CD8-positive, alpha-beta T cell (primary cell): ENCODE measurements at regions of chr5 and their contacts with region 1.

Region 1: GRCh38 chr5:66987949-66988838 is 208.4 kb downstream of the CD180 start:
- DNase-seq: peak in 2 of 9 experiments; percentile 31 to 51
- ATAC-seq: peak; percentile 69
- H3K4me3 ChIP-seq: no peak overlapping the region
- H3K4me3 Mint-ChIP-seq: no peak overlapping the region
- H3K27ac ChIP-seq: no peak overlapping the region
- H3K27ac Mint-ChIP-seq: no peak overlapping the region
- H3K4me1 ChIP-seq: no peaks in the 10 kb centered on the region
- H3K4me1 Mint-ChIP-seq: no peaks in the 10 kb centered on the region
- H3K27me3 ChIP-seq: no peaks in the 10 kb centered on the region
- H3K27me3 Mint-ChIP-seq: no peaks in the 10 kb centered on the region
- CTCF ChIP-seq: peak; percentile 94

Region 2: DNA sequence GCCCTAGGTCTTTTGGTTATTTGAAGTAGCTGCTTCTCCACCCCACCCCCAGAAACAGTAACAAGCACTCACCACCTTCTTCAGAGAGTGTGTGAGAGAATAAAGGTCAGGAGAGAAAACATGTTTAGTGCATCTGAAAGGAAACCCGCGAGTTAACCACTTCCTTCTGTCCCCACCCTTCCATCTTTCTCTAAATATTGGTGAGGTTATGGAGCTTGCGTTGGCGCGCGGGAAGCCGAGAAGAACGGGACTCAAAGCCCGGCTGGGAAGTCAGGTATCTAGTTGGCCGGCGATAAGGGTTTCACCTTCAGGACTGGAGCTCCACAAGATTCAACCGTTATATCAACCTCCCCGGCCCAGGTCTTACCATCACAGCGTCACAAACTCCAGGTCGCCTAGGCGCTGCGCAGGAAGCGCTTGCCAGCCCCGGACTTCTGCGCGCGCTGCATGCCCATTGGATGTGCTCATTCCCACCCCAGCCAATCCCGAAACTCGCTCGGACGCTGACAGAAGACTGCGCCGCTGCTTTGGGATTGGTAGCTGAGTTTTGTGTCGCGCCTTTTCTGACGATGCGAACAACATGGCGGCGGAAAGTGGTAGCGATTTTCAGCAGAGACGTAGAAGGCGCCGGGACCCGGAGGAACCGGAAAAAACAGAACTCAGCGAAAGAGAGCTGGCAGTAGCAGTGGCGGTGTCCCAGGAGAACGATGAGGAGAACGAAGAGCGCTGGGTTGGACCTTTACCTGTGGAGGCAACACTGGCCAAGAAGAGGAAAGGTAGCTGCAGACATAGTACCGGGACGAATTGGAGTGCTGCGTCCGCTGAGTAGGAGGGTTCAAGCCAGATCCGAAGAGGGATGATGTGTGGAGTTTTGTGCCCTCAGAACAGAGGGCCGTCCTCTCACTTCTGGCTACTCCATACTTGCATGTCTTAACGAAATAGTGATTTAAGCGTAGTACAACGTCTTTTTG is 1425.2 kb before region 1 on chr5 and contains the starts of genes CENPK and PPWD1:
- CTCF ChIA-PET with region 1: no interaction called
- POLR2A ChIA-PET with region 1: no interaction called
- intact Hi-C with region 1: loop called in 1 of 2 experiments (anchors 10 kb)
- DNase-seq: peak; percentile 83 to 98 (median 95)
- ATAC-seq: peak; percentile 97
- H3K4me3 ChIP-seq: peak within 1 kb of the TSS; percentile 74 to 82
- H3K4me3 Mint-ChIP-seq: peak within 1 kb of the TSS; percentile 100
- H3K27ac ChIP-seq: peak within 1 kb of the TSS; percentile 97 to 98
- H3K27ac Mint-ChIP-seq: peak within 1 kb of the TSS; percentile 100
- H3K4me1 ChIP-seq: peaks cover 37% of the 10 kb centered on the region
- H3K4me1 Mint-ChIP-seq: peaks cover 42% of the 10 kb centered on the region
- H3K27me3 ChIP-seq: no peaks in the 10 kb centered on the region
- H3K27me3 Mint-ChIP-seq: no peaks in the 10 kb centered on the region
- CTCF ChIP-seq: no peak
- total RNA-seq, gene CENPK: 5.1 to 5.3 TPM
- total RNA-seq, gene PPWD1: 78.8 to 81.5 TPM

Region 3: DNA sequence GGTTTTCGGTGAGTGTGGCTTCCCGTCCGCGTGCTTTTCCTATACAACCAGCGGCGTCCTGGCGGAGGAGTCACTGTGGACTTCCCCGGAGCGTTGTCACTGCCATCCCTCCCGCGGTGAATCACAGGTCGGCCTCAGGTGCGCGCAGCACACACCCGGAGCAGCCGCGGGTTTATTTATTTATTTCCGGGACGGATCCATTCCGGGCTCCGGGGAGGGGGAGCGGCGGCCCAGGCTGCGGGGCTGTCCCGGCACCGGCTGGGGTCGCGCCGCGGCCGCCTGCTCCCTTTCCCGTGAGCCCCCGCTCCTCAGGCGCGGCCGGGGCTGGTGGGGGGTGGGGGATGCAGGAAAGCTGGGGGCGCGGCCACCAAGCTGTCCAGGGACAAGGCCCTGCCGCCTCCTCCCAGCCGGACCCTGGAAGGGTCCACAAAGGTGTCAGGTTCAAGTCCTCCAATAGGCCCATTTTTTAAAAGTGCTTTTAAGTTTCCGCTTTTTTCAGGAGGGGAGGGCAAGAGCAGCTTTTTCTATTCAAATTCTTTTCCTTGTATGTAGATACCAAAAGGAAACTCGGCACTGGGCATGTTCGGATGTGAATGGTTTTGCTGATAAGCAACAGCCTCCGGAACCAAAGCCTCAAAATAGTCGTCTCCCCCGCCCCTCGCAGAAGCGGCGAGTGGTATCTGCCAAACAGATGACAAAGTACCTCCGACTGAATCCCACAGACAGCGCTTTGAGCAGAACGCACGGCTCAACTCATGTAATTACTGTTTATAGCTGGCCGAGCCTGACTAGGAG is 15.9 kb after region 1 on chr5:
- CTCF ChIA-PET with region 1: interaction called, 8 read pairs
- POLR2A ChIA-PET with region 1: interaction called, 5 read pairs
- intact Hi-C with region 1: loop called in 1 of 2 experiments (anchors 1 kb)
- DNase-seq: peak; percentile 70 to 93 (median 87)
- ATAC-seq: peak; percentile 78
- H3K4me3 ChIP-seq: peak overlapping the region; percentile 75 to 85
- H3K4me3 Mint-ChIP-seq: peak overlapping the region; percentile 95
- H3K27ac ChIP-seq: peak overlapping the region; percentile 59 to 75
- H3K27ac Mint-ChIP-seq: peak overlapping the region; percentile 98
- H3K4me1 ChIP-seq: peaks cover 36% of the 10 kb centered on the region
- H3K4me1 Mint-ChIP-seq: peaks cover 52% of the 10 kb centered on the region
- H3K27me3 ChIP-seq: no peaks in the 10 kb centered on the region
- H3K27me3 Mint-ChIP-seq: no peaks in the 10 kb centered on the region
- CTCF ChIP-seq: no peak

Region 4: DNA sequence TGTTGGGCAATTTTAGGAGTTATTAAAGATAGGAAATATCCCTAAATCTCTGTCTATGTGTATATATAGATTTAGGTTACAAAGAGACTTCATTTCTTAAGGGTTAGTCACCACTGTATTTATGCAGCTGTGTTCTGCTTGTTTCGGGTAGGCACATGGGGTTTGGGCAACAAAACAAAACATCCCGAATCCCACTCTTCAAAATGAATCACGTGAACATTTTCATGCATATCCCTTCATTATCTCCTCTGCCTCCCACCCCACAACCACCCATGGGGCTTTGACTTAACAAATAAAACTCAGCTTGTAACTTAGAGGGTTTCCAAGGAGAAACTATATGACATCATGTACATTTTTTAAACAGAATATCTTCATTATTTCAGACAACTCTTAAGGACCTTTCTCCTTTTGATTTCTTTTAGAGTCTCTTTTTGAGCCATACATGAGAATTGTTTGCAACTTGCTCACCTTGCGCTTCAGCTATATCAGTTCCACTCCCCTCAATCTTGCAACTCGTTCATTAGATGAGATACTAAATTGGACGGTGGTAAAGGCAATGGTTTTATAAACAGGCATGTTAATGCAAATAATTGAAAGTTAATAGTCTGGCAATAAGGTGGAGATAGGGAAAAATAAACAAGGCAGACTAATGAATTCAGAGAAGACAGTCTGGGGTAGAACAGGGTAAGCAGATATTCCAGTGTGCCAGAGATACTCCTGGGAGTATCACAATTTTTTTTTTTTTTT is 71.7 kb after region 1 on chr5:
- CTCF ChIA-PET with region 1: no interaction called
- POLR2A ChIA-PET with region 1: no interaction called
- intact Hi-C with region 1: loop called in 1 of 2 experiments (anchors 5 kb)
- DNase-seq: no peak
- ATAC-seq: no peak
- H3K4me3 ChIP-seq: no peak overlapping the region
- H3K4me3 Mint-ChIP-seq: no peak overlapping the region
- H3K27ac ChIP-seq: no peak overlapping the region
- H3K27ac Mint-ChIP-seq: no peak overlapping the region
- H3K4me1 ChIP-seq: no peaks in the 10 kb centered on the region
- H3K4me1 Mint-ChIP-seq: peaks cover 4% of the 10 kb centered on the region
- H3K27me3 ChIP-seq: no peaks in the 10 kb centered on the region
- H3K27me3 Mint-ChIP-seq: no peaks in the 10 kb centered on the region
- CTCF ChIP-seq: no peak

Region 5: DNA sequence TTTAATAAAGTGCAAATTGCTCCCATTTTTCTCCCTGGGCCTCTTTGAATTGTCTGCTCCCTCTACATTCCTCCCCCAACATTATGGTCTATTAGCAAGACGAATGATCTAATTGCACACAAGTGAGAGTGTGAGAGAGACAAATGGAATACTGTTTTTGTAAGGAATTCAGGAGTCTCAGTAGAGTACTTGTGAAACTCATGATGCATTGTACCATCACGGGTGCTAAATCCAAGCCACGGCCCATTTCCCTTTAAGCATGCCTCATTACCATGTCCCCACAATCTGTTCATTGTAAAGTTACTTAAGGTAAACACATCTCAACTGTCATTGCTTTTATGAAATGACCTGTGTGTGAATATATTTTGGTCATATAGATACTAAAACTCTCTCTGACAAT is 145.6 kb after region 1 on chr5:
- CTCF ChIA-PET with region 1: no interaction called
- POLR2A ChIA-PET with region 1: no interaction called
- intact Hi-C with region 1: no loop called
- DNase-seq: no peak
- ATAC-seq: no peak
- H3K4me3 ChIP-seq: no peak overlapping the region
- H3K4me3 Mint-ChIP-seq: no peak overlapping the region
- H3K27ac ChIP-seq: no peak overlapping the region
- H3K27ac Mint-ChIP-seq: no peak overlapping the region
- H3K4me1 ChIP-seq: no peaks in the 10 kb centered on the region
- H3K4me1 Mint-ChIP-seq: no peaks in the 10 kb centered on the region
- H3K27me3 ChIP-seq: no peaks in the 10 kb centered on the region
- H3K27me3 Mint-ChIP-seq: no peaks in the 10 kb centered on the region
- CTCF ChIP-seq: no peak

Region 6: DNA sequence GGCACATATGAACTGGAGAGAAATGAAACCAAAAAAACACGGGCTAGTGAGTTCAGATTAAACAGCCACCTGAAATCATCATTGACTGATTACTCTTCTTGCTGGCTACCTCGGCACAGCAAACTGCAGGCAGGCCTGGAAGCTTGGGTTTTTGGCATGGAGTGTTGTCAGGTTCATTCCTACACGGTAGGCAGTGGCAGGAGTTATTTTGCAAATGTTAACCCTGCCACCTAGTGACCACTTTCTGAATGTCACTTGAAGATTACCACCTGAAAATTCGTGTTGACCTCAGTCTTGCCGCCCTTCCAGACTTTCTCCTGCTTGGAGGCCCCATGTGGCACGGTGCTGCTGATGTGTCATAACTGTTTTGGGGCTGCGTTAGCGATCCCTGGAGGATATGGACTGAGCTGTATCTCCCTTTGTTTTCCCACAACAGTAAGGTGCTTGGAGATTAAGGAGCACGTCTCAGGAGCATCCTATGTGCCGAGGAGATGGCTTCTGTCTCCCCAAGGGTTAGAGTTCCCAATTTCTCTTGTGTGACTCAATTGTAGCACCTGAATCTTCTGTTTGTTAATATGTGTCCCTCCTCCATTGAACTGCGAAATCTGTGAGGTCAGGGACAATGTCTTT is 221.1 kb after region 1 on chr5:
- CTCF ChIA-PET with region 1: interaction called, 11 read pairs
- POLR2A ChIA-PET with region 1: no interaction called
- intact Hi-C with region 1: loop called (anchors 1 kb)
- DNase-seq: peak; percentile 12 to 84 (median 61)
- ATAC-seq: peak; percentile 51
- H3K4me3 ChIP-seq: no peak overlapping the region
- H3K4me3 Mint-ChIP-seq: peak overlapping the region; percentile 13
- H3K27ac ChIP-seq: no peak overlapping the region
- H3K27ac Mint-ChIP-seq: peak overlapping the region; percentile 86
- H3K4me1 ChIP-seq: peaks cover 49% of the 10 kb centered on the region
- H3K4me1 Mint-ChIP-seq: peaks cover 58% of the 10 kb centered on the region
- H3K27me3 ChIP-seq: no peaks in the 10 kb centered on the region
- H3K27me3 Mint-ChIP-seq: no peaks in the 10 kb centered on the region
- CTCF ChIP-seq: peak; percentile 81

Region 7: DNA sequence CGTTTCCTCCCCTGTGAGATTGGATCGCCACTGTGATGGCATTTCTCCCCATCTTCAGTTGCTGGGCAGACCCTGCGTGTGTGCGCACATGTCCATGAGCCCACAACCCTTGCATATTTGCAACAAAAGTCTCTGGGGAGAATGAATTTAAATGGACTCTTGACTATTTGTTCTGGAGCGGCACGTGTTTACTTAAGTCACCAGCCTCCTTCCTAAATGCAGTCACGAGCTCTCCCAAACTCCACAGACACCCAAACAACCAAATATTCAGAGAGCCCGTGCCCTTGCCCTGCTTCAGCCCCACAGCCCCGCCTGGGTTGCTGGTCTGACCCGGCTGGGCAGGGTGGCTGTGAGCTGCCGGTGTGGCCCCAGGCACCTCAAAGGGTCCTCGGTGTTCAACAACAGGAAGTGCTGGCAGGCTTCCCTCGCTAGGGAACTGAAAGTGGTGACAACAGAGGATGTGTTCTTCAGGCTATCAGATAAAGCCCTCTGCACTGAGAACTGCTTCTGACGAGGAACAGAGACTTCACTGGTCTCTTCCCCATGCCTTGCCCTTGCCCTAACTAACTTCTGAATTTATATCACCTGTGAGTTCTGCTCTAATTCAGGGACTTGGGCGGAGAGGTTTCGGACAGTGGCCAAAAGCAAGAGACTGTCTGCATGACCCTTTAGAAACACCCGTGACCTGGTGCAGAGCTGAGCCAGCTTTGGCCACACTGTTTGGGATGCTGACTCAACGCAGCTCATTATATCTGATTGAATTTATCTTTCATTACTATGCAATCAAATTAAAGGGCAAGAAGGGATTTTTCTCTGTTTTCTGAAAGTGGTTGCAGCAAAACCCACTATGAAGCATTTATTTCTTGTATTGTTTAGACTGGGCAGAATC is 227.6 kb after region 1 on chr5:
- CTCF ChIA-PET with region 1: interaction called, 11 read pairs
- POLR2A ChIA-PET with region 1: no interaction called
- intact Hi-C with region 1: no loop called
- DNase-seq: peak; percentile 51 to 88 (median 74)
- ATAC-seq: peak; percentile 97
- H3K4me3 ChIP-seq: peak overlapping the region; percentile 19 to 39
- H3K4me3 Mint-ChIP-seq: peak overlapping the region; percentile 72
- H3K27ac ChIP-seq: peak overlapping the region; percentile 60 to 61
- H3K27ac Mint-ChIP-seq: peak overlapping the region; percentile 99
- H3K4me1 ChIP-seq: peaks cover 45% of the 10 kb centered on the region
- H3K4me1 Mint-ChIP-seq: peaks cover 60% of the 10 kb centered on the region
- H3K27me3 ChIP-seq: no peaks in the 10 kb centered on the region
- H3K27me3 Mint-ChIP-seq: no peaks in the 10 kb centered on the region
- CTCF ChIP-seq: no peak